ENCODE measurements at regions of chr4 and their contacts with region 1.

Region 1: DNA sequence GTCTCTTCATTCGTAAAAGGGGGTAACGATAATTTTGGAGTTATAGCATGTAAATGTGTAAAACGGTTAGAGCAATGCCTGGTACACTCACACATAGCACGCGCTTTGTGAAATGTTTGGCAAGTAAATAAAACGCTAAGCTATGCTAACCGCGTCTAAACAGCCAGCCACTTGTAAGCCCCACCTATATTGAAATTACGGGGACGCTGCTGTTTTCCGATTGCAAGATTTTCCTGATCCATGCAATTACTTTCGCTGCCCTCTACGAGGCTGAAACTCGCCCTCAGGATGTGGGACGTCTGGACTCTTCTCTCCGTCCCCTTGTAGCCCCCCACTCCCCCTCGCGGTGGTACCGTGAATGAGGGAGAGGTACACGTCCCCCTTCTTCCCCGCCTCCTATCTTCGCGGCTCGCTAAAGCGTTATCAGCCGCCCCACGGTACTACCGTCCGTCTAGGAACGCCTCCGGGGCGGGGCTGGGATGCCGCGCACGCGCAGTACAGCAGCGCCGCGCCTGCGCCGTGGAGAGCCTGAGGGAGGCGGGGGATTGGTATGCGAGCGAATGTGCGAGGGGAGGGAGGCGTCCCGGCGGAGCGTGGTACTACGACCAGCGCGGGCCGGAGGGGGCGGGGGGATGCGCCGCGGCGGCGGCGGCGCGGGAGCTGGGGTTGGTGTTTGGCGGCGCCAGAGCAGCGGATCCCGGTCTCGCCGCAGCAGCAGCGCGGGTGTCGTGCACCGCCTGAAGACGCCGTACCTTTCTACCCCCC is at the start of gene STIM2:
- DNase-seq: peak; percentile 100
- H3K4me3 Mint-ChIP-seq: peak within 1 kb of the TSS; percentile 91
- H3K27ac Mint-ChIP-seq: peak within 1 kb of the TSS; percentile 97
- H3K4me1 Mint-ChIP-seq: peaks cover 70% of the 10 kb centered on the region
- H3K27me3 Mint-ChIP-seq: no peaks in the 10 kb centered on the region
- total RNA-seq, gene STIM2: 54.1 and 55.6 TPM in 2 replicates

Region 2: DNA sequence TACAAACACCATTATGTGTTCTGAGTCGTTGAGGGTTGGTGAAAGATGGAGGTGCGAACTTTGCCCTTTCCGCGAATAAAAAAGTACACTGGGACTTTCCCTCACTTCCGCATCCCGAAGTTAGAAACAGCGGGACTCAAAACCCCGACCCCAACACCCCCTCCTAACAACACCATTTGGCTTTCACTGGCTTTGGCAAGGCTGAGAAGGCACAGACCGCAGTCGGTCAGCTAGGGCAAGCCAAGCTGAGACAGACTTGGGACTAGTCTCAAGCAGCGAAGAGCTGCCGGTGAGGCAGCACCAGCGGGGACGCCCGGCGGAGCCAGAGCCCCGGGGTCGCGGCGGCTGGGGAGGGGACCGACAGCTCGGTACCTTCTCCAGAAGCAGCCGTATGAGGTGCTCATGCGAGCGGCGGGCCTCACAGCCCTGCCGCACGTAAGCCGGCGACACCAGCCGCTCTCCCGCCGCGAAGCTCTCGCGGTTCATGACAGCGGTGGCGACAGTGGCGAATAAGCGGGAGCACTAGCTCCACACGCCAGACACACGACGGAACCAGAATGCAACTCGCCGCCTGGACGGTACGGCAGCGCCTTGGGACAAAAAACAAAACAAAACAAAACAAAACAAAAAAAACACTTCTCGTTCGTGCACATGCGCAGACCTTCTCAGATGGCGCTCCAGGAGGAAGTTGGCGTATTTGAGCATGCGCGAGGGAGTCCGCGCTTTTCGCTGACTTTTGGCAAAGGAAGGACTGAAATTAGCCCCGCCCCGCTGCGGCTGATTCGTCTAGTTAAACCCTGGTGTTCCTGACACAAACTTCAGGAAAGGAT is 1700.2 kb before region 1 on chr4 and contains the start of gene SEPSECS:
- intact Hi-C with region 1: loop called (anchors 5 kb)
- DNase-seq: peak; percentile 93
- H3K4me3 Mint-ChIP-seq: peak within 1 kb of the TSS; percentile 91
- H3K27ac Mint-ChIP-seq: peak within 1 kb of the TSS; percentile 90
- H3K4me1 Mint-ChIP-seq: peaks cover 36% of the 10 kb centered on the region
- H3K27me3 Mint-ChIP-seq: peaks cover 3% of the 10 kb centered on the region
- total RNA-seq, gene SEPSECS: 13.4 and 15.3 TPM in 2 replicates

Region 3: GRCh38 chr4:25938787-25939186 is 921.6 kb before region 1 on chr4:
- intact Hi-C with region 1: loop called (anchors 5 kb)
- DNase-seq: no peak
- H3K4me3 Mint-ChIP-seq: peak overlapping the region; percentile 36
- H3K27ac Mint-ChIP-seq: peak overlapping the region; percentile 91
- H3K4me1 Mint-ChIP-seq: peaks cover 37% of the 10 kb centered on the region
- H3K27me3 Mint-ChIP-seq: peaks cover 4% of the 10 kb centered on the region

Region 4: GRCh38 chr4:26459054-26459755 is 401.1 kb before region 1 on chr4:
- intact Hi-C with region 1: loop called (anchors 10 kb)
- DNase-seq: no peak
- H3K4me3 Mint-ChIP-seq: no peak overlapping the region
- H3K27ac Mint-ChIP-seq: no peak overlapping the region
- H3K4me1 Mint-ChIP-seq: peaks cover 13% of the 10 kb centered on the region
- H3K27me3 Mint-ChIP-seq: peaks cover 2% of the 10 kb centered on the region

Region 5: GRCh38 chr4:26822546-26822945 is 37.8 kb before region 1 on chr4:
- intact Hi-C with region 1: loop called (anchors 1 kb)
- DNase-seq: no peak
- H3K4me3 Mint-ChIP-seq: peak overlapping the region; percentile 40
- H3K27ac Mint-ChIP-seq: no peak overlapping the region
- H3K4me1 Mint-ChIP-seq: peaks cover 9% of the 10 kb centered on the region
- H3K27me3 Mint-ChIP-seq: no peaks in the 10 kb centered on the region

Region 6: GRCh38 chr4:26839534-26839951 is 20.8 kb before region 1 on chr4:
- intact Hi-C with region 1: no loop called
- DNase-seq: no peak
- H3K4me3 Mint-ChIP-seq: no peak overlapping the region
- H3K27ac Mint-ChIP-seq: no peak overlapping the region
- H3K4me1 Mint-ChIP-seq: no peaks in the 10 kb centered on the region
- H3K27me3 Mint-ChIP-seq: no peaks in the 10 kb centered on the region

Region 7: GRCh38 chr4:26907731-26908599 is 47.6 kb after region 1 on chr4:
- intact Hi-C with region 1: loop called (anchors 1 kb)
- DNase-seq: no peak
- H3K4me3 Mint-ChIP-seq: peak overlapping the region; percentile 59
- H3K27ac Mint-ChIP-seq: peak overlapping the region; percentile 85
- H3K4me1 Mint-ChIP-seq: peaks cover 76% of the 10 kb centered on the region
- H3K27me3 Mint-ChIP-seq: no peaks in the 10 kb centered on the region